CD8-positive, alpha-beta T cell (primary cell): ENCODE measurements at regions of chr6 and their contacts with region 1.

Region 1: GRCh38 chr6:24494821-24495795 is at the start of gene ALDH5A1:
- DNase-seq: peak; percentile 60 to 91 (median 79)
- ATAC-seq: peak; percentile 84
- H3K4me3 ChIP-seq: peak within 1 kb of the TSS; percentile 62 to 85
- H3K4me3 Mint-ChIP-seq: peak within 1 kb of the TSS; percentile 87
- H3K27ac ChIP-seq: peak within 1 kb of the TSS; percentile 43 to 62
- H3K27ac Mint-ChIP-seq: peak within 1 kb of the TSS; percentile 87
- H3K4me1 ChIP-seq: peaks cover 12% of the 10 kb centered on the region
- H3K4me1 Mint-ChIP-seq: peaks cover 38% of the 10 kb centered on the region
- H3K27me3 ChIP-seq: no peaks in the 10 kb centered on the region
- H3K27me3 Mint-ChIP-seq: no peaks in the 10 kb centered on the region
- CTCF ChIP-seq: no peak
- total RNA-seq, gene ALDH5A1: 4.0 to 4.7 TPM

Region 2: DNA sequence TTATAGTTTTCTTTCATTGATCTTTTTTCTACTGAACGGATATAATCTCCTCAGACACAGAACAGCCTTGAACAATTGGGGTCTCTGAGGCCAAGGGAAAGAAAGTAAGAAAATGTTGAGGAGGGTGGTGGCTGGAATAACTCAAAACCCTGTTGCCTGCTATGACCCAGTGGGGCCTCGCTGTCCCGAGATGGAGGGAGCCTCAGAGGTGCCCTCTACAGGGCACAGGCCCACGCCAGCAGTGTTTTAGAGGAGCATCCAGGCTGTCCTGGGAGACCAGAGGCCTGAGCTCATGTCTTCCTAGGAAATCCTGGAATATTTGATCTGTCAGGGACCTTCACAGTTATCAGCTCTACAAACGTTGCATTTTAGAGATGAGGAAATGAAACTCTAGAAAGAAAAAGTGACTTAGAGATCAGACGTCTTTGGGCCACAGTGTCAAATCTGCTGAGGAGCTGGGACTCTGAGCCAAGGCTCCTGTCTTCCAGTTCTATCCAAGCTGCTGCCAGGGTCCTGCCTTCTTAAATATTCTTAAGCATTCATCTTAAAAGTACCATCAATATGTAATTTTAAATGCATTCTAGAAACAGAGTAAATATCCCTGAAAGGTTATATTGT is 25.9 kb after region 1 on chr6:
- CTCF ChIA-PET with region 1: interaction called, 18 read pairs
- POLR2A ChIA-PET with region 1: interaction called, 3 read pairs
- intact Hi-C with region 1: loop called in 1 of 2 experiments (anchors 2 kb)
- DNase-seq: peak in 7 of 9 experiments; percentile 2 to 43 (median 26)
- ATAC-seq: peak; percentile 56
- H3K4me3 ChIP-seq: no peak overlapping the region
- H3K4me3 Mint-ChIP-seq: no peak overlapping the region
- H3K27ac ChIP-seq: no peak overlapping the region
- H3K27ac Mint-ChIP-seq: no peak overlapping the region
- H3K4me1 ChIP-seq: no peaks in the 10 kb centered on the region
- H3K4me1 Mint-ChIP-seq: peaks cover 1% of the 10 kb centered on the region
- H3K27me3 ChIP-seq: no peaks in the 10 kb centered on the region
- H3K27me3 Mint-ChIP-seq: no peaks in the 10 kb centered on the region
- CTCF ChIP-seq: no peak